ENCODE measurements at regions of chr5 and their contacts with region 1.

Region 1: DNA sequence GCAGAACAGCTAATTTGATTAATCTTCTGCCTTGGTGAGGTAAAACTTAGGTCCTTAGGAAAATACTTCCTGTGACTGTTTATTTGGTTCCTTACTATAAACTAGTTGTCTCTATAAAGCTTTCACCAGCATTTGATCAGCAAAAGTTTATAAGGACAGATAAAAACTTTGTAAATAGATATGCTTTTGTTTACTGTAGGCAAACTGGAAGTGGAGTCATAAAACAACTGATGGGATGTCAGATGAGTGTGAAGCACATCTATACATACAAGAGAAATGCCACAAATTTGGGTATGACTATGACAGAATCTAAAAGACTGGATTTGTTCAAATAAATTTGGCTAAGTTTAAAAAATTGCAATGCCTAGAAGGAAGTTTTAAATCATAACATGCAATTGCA is 5.5 kb downstream of the PTGER4 start:
- DNase-seq: no peak
- ATAC-seq: no peak
- H3K4me3 Mint-ChIP-seq: peak overlapping the region; percentile 87
- H3K27ac Mint-ChIP-seq: peak overlapping the region; percentile 72
- H3K4me1 Mint-ChIP-seq: peaks cover 56% of the 10 kb centered on the region
- H3K27me3 Mint-ChIP-seq: no peaks in the 10 kb centered on the region

Region 2: DNA sequence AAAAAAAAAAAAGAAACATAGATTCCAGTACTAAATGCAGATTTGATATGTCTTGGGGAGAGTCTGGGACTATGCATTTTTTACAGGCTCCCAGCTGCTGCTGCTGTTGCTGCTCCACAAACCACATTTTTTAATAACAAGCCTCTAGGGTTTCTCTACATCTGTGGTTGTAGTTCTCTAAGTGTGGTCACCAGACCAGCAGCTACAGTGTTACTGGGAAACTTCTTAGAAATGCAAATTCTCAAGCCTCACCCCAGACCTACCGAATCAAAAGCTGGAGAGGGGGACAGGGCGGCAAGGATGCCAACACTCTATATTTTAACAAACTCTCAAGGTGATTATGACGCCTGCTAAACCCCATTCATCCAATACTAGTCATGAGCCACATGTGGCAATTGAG is 298.9 kb before region 1 on chr5:
- POLR2A ChIA-PET with region 1: interaction called, 10 read pairs
- DNase-seq: peak; percentile 36
- ATAC-seq: peak; percentile 71
- H3K4me3 Mint-ChIP-seq: peak overlapping the region; percentile 79
- H3K27ac Mint-ChIP-seq: peak overlapping the region; percentile 86
- H3K4me1 Mint-ChIP-seq: peaks cover 75% of the 10 kb centered on the region
- H3K27me3 Mint-ChIP-seq: no peaks in the 10 kb centered on the region

Region 3: DNA sequence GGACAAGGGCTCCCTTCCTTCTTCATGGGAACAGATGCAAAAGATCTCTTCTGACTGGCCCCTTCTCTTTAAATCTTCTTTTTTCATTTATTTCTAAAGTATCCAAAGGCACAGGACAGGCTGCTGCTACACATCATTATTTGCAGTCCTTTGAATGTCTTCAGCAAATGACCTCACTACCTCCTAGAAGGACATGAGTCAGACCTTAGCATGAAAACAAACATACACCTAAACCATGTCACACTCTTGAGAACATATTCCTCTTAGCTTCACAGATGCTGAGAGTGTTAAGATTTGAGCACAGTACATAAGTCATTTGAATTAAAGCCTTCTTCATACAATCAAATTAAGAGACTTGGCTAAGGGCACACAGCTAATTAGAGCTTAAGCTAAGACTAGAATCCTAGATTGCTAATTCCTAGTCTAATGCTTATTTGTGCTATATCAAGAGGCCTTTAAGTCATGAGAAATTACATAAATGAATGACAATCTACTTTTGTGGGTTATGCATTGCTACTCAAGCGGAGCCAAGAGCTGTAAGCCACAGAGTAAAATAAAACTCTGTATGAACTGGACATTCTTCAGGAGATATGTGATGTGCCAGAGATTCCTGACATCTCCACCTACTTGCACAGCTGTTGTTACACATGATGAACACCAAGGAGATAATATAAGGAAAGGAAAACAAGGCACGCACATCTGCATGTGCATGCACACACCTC is 114.6 kb before region 1 on chr5:
- POLR2A ChIA-PET with region 1: no interaction called
- DNase-seq: no peak
- ATAC-seq: peak; percentile 36
- H3K4me3 Mint-ChIP-seq: no peak overlapping the region
- H3K27ac Mint-ChIP-seq: no peak overlapping the region
- H3K4me1 Mint-ChIP-seq: peaks cover 6% of the 10 kb centered on the region
- H3K27me3 Mint-ChIP-seq: no peaks in the 10 kb centered on the region

Region 4: DNA sequence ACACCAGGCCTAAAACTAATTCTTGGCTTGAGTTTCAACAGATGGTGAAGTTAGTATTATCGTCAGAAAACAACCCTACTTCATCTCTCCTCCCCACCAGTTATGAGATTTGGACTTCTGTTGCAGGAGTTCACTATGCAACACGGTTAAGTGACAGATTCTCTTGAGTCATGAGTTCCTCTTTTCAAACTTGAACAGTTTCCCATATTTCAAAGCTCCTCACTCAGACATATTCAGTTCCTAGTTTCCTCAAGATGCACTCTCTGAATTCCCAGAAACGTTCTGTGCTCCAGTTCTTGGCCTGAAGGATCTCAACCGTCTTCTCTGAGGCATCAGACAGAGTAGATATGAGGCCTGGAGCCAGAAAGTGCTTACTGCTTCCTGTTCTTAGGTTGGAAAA is 12.8 kb before region 1 on chr5:
- POLR2A ChIA-PET with region 1: no interaction called
- DNase-seq: no peak
- ATAC-seq: no peak
- H3K4me3 Mint-ChIP-seq: no peak overlapping the region
- H3K27ac Mint-ChIP-seq: peak overlapping the region; percentile 39
- H3K4me1 Mint-ChIP-seq: peaks cover 54% of the 10 kb centered on the region
- H3K27me3 Mint-ChIP-seq: peaks cover 2% of the 10 kb centered on the region